ENCODE measurements at regions of chr12 and their contacts with region 1.

Region 1: DNA sequence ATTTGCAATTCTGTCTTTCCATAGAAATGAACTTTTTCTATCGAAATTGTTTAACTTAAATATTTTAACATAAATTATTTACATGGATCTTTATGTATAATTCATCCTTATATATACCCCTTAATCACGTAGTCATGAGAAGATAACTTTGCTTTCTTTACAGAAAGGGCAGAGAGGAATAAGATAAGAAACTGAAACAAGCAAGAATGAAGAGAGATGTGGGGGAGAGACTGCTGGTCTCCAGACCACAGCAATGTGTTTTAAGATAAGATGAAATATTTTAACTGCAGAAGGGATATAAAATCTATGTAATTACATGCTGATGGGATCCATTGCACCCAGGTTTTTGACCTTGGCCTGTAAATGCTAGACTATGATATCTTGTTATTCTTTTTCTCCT is 34.7 kb upstream of the DNM1L start:
- DNase-seq: no peak
- ATAC-seq: no peak
- H3K4me3 ChIP-seq: no peak overlapping the region
- H3K27ac ChIP-seq: no peak overlapping the region
- H3K4me1 ChIP-seq: peaks cover 0 to 7% (median 0%) of the 10 kb centered on the region in 9 donors
- H3K27me3 ChIP-seq: no peaks in the 10 kb centered on the region
- CTCF ChIP-seq: no peak

Region 2: DNA sequence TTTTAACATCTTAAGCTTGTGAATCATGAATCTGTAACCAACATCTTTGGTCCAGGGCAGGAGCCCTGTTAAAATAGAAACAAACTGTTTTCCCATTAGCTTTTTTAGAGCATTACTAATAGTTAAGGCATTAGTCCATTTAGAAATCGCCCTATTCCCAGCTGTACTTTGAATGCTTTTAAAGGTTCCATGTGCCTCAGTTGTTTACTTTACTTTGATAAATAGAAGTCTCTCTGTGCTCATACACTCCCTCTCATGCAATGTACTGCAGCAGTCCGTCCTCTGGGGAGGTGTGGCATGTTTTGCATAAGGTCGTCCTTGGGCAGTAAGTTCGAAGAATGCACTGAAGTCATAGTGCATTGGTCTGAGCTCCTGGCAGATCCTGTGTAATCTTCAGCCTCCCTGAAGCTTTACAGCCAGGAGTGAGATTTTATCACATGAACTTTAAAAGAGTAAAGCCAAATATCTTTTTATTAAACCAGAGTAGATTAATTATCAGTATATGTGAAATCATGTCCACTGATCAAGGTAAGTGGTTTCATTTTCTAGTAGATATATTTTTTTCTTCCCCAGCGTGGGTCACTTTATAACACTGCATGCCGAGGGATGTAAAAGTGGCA is 110.3 kb before region 1 on chr12:
- intact Hi-C with region 1: no loop called
- DNase-seq: peak in 1 of 2 donors; percentile 53
- ATAC-seq: peak; percentile 73 to 92 (median 88)
- H3K4me3 ChIP-seq: peak overlapping the region; percentile 23 to 62 (median 52)
- H3K27ac ChIP-seq: peak overlapping the region; percentile 62 to 89 (median 75)
- H3K4me1 ChIP-seq: peaks cover 0 to 64% (median 57%) of the 10 kb centered on the region in 9 donors
- H3K27me3 ChIP-seq: no peaks in the 10 kb centered on the region
- CTCF ChIP-seq: no peak

Region 3: DNA sequence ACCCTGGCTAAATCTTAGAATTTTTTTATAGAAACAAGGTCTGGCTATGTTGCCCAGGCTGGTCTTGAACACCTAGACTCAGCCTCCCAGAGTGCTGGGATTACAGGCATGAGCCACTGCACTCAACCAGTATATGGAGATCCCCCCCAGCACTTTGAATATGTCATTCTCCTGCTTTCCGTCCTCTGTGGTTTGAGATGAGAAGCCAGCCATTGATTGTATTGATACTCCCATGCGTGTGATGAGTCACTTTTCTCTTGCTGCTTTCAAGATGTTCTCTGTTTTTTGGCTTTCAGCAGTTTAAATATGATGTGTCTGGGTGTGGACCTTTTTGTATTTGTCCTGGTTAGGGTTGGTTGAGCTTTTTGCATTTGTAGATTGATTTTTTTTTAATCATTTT is 40.6 kb before region 1 on chr12:
- intact Hi-C with region 1: loop called in 1 of 10 experiments (anchors 5 kb)
- DNase-seq: no peak
- ATAC-seq: no peak
- H3K4me3 ChIP-seq: no peak overlapping the region
- H3K27ac ChIP-seq: no peak overlapping the region
- H3K4me1 ChIP-seq: peaks cover 0 to 34% (median 8%) of the 10 kb centered on the region in 9 donors
- H3K27me3 ChIP-seq: no peaks in the 10 kb centered on the region
- CTCF ChIP-seq: no peak

Measured in heart right ventricle (tissue), 16 donors.